ENCODE measurements at regions of chr6 and their contacts with region 1.

Region 1: DNA sequence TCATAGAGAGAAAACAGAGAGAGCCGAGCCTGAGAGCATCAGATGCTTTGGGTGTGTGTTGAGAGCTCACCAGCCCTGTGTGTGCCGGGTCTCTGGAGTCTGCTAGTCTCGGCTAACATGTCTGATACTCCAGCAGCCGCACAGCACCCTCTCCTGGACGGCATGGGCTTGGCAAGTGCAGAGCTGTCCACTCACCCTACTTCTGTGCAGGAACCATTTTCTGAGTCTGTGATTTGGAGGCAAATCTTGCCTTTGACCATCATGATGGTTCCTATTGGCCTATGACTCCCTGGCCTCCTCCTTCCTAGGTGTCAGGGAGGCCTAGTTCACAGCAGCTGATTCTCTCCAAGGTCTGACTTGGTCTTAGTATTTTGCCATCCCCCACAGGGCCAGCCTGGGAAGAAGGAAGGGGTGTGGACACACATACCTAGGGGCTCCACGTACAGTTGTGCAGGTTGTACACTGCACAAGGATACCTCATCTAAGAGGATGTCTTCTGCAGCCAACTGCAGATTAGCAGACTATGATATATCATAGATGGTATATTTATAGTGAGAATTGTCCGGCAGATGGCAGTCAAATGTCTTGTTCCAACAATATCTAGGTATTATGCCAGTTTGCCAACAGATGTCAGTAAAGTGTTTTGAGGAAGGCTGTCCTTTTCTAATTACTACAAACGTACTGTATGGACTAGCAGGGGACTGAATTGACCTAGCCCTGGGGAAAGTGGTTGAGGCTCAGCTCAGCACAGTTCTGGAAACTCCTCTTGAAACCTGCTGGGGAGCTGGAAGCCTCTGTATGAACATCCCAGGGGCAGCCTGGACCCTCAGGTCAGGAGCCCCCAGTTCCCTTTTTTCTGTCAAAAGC is 13.0 kb downstream of the FGD2 start:
- DNase-seq: peak; percentile 91
- ATAC-seq: peak; percentile 97 to 98

Region 2: DNA sequence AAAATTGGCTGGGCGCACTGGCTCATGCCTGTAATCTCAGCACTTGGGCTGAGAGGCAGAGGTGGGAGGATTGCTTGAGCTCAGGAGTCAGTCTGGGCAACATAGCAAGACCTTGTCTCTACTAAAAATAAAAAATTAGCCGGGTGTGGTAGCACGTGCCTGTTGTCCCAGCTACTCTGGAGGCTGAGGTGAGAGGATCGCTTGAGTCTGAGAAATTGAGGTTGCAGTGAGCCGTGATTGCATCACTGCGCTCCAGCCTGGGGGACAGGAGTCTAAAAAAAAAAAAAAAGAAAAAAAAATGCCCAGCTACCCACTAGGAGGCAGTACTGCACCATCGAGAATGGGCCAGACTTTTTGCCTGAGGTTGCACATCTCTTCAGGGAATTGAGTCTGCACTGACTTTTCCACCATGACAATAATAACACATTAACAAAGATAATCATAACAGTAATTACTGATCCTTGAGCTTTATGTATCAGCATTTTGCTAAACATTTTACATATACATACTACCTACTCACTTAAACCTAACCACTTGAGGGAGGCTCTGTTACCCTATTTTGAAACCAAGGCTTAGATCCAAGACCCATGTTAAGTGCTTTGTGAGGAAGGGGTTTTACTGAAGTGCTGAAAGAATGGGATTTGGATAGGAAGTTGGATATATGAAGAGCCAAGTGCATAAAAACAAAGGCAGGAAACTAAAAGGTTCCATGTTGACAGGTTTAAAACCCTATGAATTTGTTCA is 403.2 kb before region 1 on chr6:
- intact Hi-C with region 1: loop called in 1 of 2 experiments (anchors 10 kb)
- DNase-seq: peak; percentile 60
- ATAC-seq: peak; percentile 57 to 68

Region 3: DNA sequence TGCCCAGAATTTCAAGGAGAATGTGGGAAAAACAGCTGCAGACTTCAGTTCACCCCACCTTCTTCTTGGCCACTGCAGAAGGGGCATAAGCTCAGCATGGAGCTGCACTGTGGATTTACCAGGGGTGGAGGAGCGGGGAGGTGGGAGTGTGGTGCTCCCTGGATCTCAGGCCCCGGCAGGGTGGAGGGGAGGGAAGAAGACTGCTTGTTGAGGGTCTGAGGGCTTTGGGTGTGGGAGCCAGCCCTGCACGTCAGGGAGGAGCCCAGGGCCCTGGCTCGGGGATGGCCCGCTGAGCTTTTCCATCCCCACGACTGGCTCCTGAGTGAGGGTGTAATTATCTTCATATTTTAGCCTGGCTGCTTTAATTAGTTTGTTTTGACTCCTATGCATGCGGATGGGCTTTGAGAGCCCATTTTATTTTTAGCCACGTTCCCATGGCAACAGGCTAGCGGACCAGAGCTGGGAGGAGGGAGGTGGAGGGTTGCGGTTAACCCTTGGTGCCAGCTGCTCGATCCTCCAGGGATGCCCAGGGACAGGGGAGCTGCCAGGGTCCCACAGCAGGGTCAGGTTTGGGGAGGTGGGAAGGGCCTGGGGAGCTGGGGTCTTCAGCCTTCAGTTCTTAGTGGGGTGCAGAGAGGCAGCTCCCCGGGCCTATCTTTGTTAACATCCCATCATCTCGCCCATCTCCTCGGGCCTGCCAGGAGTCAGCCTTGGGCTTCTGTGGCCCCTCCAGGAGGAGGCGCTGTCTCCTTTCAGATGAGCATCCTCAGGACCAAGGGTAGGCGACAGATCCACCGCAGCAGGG is 252.6 kb before region 1 on chr6:
- intact Hi-C with region 1: loop called (anchors 2 to 5 kb)
- DNase-seq: peak; percentile 85
- ATAC-seq: peak; percentile 63 to 73

Region 4: DNA sequence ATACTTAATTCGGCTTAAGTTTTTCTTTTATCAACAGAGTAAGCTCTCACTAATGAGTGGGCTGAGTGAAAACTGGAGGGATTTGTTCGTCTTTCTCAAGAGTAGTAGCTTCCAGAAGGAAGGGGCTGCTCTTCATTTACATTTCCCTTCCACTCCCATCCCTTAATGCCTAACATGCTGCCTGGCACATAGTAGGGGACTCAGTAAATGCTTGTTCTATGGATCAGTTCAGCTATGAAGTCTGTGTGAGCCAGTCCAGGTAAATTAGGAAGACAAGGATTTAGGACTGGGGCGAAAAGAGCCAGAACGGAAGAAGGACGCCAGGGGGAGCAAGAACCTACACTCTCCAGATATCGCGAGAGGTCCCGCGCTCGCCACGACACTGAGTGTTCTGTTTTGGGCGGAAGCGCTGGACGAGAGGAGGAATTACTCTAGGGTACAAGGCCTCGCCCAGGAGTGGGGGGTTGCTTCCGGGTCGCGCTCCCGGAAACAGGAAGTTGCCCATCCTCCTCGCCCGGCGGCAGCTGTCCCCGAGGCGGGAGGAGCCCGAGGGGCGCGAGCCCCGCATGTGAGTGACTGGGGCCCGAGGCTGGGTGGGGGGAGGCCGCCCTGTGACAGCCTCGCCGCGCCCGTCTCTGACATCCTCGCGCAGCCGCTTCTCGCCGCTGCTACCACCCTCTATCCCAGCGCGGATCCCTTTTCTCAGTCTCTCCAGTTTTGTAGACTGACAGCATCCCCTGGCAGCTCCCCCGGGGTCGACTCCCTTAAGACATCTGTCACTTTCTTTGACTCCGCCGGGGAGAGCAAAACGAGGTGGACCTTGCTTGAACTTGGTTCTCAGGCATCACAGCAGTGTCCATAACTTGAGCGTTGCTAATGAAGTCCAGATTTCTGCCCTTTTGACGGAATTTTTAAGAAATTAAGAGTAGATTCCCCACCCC is 132.7 kb before region 1 on chr6 and contains the start of gene C6orf89:
- intact Hi-C with region 1: loop called (anchors 1 to 10 kb)
- DNase-seq: peak; percentile 99
- ATAC-seq: peak; percentile 100
- total RNA-seq, gene C6orf89: 62.9 to 74.1 TPM

Region 5: DNA sequence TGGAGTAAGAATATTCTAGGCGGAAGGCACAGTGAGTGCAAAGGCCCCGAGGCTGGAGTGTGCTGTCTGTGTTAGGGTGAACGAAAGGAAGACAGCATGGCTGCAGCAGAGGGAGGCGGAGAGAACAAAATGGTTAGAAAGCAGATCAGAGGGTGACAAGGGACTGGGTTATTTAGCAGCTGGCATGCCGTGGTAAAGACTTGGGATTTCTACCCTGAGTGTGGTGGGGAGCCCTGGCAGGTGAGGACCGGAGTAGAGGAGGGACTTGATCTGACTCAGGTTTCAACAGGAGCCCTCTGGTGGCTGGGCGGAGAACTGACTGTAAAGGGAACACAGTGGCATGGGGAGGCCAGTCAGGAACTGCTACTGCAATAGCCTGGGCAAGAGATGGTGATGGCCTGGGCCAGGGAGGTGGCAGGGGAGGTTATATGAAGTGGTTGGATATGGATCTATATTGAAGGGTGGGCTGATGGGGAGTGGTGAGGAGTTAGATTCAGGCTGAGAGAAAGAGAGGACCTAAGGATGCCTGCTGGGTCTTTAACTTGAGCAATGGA is 189.5 kb after region 1 on chr6:
- intact Hi-C with region 1: loop called (anchors 2 to 10 kb)
- DNase-seq: peak; percentile 83
- ATAC-seq: peak; percentile 64 to 75